ENCODE measurements at regions of chr9 and their contacts with region 1.

Region 1: GRCh38 chr9:34126207-34127034 is at the start of gene DCAF12:
- ATAC-seq: peak; percentile 90 to 96 (median 94)
- H3K4me3 ChIP-seq: peak within 1 kb of the TSS; percentile 57 to 88 (median 78)
- H3K27ac ChIP-seq: peak within 1 kb of the TSS; percentile 85 to 89
- H3K4me1 ChIP-seq: peaks cover 7 to 12% of the 10 kb centered on the region in 2 donors
- total RNA-seq, gene DCAF12: 15.8 to 32.7 (median 22.8) TPM

Region 2: DNA sequence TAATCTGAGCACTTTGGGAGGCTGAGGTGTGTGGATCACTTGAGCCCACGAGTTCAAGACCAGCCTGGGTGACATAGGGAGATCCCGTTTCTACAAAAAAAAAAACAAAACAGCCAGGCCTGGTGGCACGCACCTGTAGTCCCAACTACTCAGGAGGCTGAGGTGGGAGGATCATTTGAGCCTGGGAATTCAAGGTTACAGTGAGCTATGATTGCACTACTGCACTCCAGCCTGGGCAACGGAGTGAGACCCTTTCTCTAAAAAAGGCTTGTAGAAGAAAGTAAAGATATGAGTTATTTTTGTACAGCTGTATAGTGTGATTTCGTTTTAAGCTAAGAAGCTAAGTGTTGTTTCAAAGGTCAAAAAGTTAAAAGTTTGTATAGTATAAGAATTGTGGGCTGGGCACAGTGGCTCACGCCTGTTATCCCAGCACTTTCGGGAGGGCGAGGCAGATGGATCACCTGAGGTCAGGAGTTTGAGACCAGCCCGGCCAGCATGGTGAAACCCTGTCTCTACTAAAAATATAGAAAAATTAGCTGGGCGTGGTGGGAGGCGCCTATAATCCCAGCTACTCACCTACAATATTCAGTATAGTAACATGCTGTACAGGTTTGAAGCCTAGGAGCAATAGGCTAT is 290.7 kb before region 1 on chr9:
- in situ Hi-C with region 1: no loop called
- ATAC-seq: peak in 1 of 8 experiments; percentile 11
- H3K4me3 ChIP-seq: no peak overlapping the region
- H3K27ac ChIP-seq: no peak overlapping the region
- H3K4me1 ChIP-seq: no peaks in the 10 kb centered on the region

Region 3: GRCh38 chr9:34233672-34234071 is 107.3 kb after region 1 on chr9:
- in situ Hi-C with region 1: loop called in 1 of 9 experiments (anchors 25 kb)
- ATAC-seq: peak in 2 of 8 experiments; percentile 65
- H3K4me3 ChIP-seq: no peak overlapping the region
- H3K27ac ChIP-seq: no peak overlapping the region
- H3K4me1 ChIP-seq: no peaks in the 10 kb centered on the region